ENCODE measurements at regions of chr9 and their contacts with region 1.

Region 1: DNA sequence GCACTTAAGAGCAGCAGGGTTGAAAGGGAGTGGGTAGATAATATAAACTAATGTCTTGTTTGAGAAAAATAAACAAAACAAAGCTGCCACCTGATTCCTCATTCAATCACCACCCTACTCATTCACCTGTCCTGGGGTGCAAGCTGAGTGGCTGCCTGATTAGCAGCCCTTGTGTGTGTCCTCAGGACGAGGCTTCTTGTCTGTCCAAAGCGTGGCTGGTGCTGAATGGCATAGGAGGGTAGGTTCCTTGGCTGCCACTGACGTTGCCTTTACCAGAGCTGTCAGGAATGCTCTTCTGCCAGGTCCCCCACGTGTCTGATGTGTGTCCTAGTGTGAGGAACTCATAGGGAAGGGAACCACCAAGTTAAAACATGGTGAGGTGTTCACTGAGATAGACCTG is 146.6 kb upstream of the SLC24A2 start:
- DNase-seq: no peak
- H3K4me3 ChIP-seq: no peak overlapping the region
- H3K27ac ChIP-seq: no peak overlapping the region
- H3K4me1 ChIP-seq: peaks cover 0 to 7% (median 0%) of the 10 kb centered on the region in 4 experiments; a peak in 3 of 7 replicates
- H3K27me3 ChIP-seq: peaks cover 0 to 2% (median 0%) of the 10 kb centered on the region in 4 experiments; a peak in 2 of 7 replicates
- CTCF ChIP-seq: no peak
- EP300 ChIP-seq: no peak
- POLR2A ChIP-seq: no peak
- RAD21 ChIP-seq: no peak

Region 2: GRCh38 chr9:19946441-19947109 is 11.2 kb after region 1 on chr9:
- CTCF ChIA-PET with region 1: interaction called, 20 read pairs
- POLR2A ChIA-PET with region 1: interaction called, 4 read pairs
- DNase-seq: no peak
- H3K4me3 ChIP-seq: no peak overlapping the region
- H3K27ac ChIP-seq: no peak overlapping the region
- H3K4me1 ChIP-seq: peaks cover 0 to 5% (median 0%) of the 10 kb centered on the region in 4 experiments; a peak in 1 of 7 replicates
- H3K27me3 ChIP-seq: no peaks in the 10 kb centered on the region
- CTCF ChIP-seq: peak; percentile 37 to 69 (median 48); a peak in 3 of 4 replicates
- EP300 ChIP-seq: no peak
- POLR2A ChIP-seq: no peak
- RAD21 ChIP-seq: peak; percentile 74 to 82

Region 3: GRCh38 chr9:20048985-20049384 is 113.6 kb after region 1 on chr9:
- CTCF ChIA-PET with region 1: no interaction called
- POLR2A ChIA-PET with region 1: no interaction called
- DNase-seq: no peak
- H3K4me3 ChIP-seq: no peak overlapping the region
- H3K27ac ChIP-seq: no peak overlapping the region
- H3K4me1 ChIP-seq: no peaks in the 10 kb centered on the region
- H3K27me3 ChIP-seq: no peaks in the 10 kb centered on the region
- CTCF ChIP-seq: no peak
- EP300 ChIP-seq: no peak
- POLR2A ChIP-seq: no peak
- RAD21 ChIP-seq: no peak

Measured in H1 (cell line).